ENCODE measurements at regions of chr14 and their contacts with region 1.

Region 1: DNA sequence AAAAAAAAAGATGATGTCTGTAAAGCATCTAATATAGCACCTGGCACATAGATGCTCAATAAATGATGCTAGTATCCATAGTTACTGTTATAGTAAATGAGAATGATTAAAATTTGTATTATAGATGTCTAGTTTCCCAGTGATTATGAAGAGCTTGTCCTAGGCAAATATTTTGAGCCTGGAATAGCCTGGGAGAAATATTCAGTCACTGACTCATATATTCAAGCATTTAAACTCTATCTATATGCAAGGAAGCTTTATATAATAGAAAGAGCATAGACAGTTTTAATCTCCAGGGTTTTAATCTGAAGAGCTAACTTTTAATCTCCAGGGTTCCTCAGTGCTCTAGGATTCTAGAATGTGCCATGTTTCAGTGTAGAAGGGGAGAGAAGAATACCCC is 91.5 kb upstream of the VASH1 start:
- DNase-seq: no peak
- ATAC-seq: no peak
- H3K4me3 ChIP-seq: no peak overlapping the region
- H3K27ac ChIP-seq: no peak overlapping the region
- H3K4me1 ChIP-seq: 0 out of 2 replicates have a peak, but pooled peaks cover 4% of the 10 kb centered on the region
- H3K27me3 ChIP-seq: peaks cover 48% of the 10 kb centered on the region
- CTCF ChIP-seq: no peak

Region 2: DNA sequence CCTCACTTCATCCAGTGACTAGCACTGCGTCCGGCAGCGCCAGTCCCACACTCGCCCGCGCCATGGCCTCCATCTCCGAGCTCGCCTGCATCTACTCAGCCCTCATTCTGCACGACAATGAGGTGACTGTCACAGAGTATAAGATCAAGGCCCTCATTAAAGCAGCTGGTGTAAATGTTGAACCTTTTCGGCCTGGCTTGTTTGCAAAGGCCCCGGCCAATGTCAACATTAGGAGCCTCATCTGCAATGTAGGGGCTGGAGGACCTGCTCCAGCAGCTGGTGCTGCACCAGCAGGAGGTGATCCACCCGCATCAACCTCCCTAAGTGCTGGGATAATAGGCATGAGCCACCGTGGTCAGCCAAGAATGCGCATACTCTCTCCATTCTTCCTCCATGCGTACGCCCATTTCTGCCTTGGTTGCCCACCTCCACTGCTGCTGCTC is 298.9 kb after region 1 on chr14:
- CTCF ChIA-PET with region 1: no interaction called
- POLR2A ChIA-PET with region 1: interaction called, 11 read pairs
- intact Hi-C with region 1: no loop called
- DNase-seq: no peak
- ATAC-seq: no peak
- H3K4me3 ChIP-seq: no peak overlapping the region
- H3K27ac ChIP-seq: no peak overlapping the region
- H3K4me1 ChIP-seq: no peaks in the 10 kb centered on the region
- H3K27me3 ChIP-seq: no peaks in the 10 kb centered on the region
- CTCF ChIP-seq: no peak